ENCODE measurements at regions of chr16 and their contacts with region 1.

Region 1: DNA sequence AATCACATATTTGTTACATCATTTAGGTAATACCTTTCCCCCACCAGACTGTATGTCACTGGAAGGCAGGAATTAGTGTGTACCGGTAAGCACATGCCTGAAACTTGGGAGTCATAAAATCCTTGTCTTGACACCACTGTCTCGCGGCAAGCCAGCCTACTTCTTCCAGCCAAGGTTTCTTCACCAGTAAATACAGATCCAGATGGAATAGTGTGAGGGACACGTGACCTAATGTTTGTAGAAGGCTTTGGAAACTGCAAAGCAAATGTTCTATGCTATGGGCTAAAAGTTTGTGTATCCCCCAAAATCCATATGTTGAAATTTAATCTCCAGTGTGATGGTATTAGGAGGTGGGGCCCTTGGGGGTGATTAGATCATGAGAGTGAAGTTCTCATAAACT is 126.1 kb downstream of the HS3ST4 start:
- DNase-seq: no peak
- ATAC-seq: no peak
- H3K4me3 ChIP-seq: no peak overlapping the region
- H3K27ac ChIP-seq: no peak overlapping the region
- H3K4me1 ChIP-seq: no peaks in the 10 kb centered on the region
- H3K27me3 ChIP-seq: 0 out of 2 replicates have a peak, but pooled peaks cover 4% of the 10 kb centered on the region
- CTCF ChIP-seq: no peak

Region 2: GRCh38 chr16:25888868-25889267 is 71.0 kb after region 1 on chr16:
- CTCF ChIA-PET with region 1: no interaction called
- POLR2A ChIA-PET with region 1: no interaction called
- in situ Hi-C with region 1: no loop called
- intact Hi-C with region 1: no loop called
- DNase-seq: no peak
- ATAC-seq: no peak
- H3K4me3 ChIP-seq: no peak overlapping the region
- H3K27ac ChIP-seq: no peak overlapping the region
- H3K4me1 ChIP-seq: no peaks in the 10 kb centered on the region
- H3K27me3 ChIP-seq: peaks cover 7% of the 10 kb centered on the region
- CTCF ChIP-seq: no peak

Region 3: DNA sequence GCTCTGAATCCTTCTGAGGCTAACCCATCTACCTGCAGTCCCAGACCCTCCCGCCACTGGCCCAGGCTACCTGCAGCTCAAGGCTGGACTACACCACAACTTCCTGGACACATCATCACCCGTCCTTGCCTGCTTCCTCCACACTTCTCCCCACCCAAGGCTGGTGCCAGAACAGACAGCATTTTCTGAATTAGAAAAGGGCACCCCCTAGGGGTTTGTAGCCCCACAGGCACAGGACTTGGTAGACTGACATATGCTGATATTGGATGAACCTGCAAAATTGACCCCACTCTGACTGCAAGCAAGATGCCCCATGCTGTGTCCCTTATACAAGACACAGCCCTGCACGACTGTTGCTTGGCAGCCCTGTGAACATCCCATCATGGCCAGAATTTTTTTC is 977.3 kb after region 1 on chr16:
- CTCF ChIA-PET with region 1: no interaction called
- POLR2A ChIA-PET with region 1: interaction called, 10 read pairs
- in situ Hi-C with region 1: no loop called
- intact Hi-C with region 1: no loop called
- DNase-seq: no peak
- ATAC-seq: no peak
- H3K4me3 ChIP-seq: no peak overlapping the region
- H3K27ac ChIP-seq: no peak overlapping the region
- H3K4me1 ChIP-seq: no peaks in the 10 kb centered on the region
- H3K27me3 ChIP-seq: no peaks in the 10 kb centered on the region
- CTCF ChIP-seq: no peak